GM12878 (cell line): ENCODE measurements at regions of chr6 and their contacts with region 1.

Region 1: GRCh38 chr6:13454286-13455221 is 32.8 kb downstream of the GFOD1 start:
- DNase-seq: peak; percentile 56
- ATAC-seq: peak; percentile 74
- H3K4me3 ChIP-seq: no peak overlapping the region
- H3K27ac ChIP-seq: peak overlapping the region; percentile 71
- H3K4me1 ChIP-seq: peaks cover 48% of the 10 kb centered on the region
- H3K27me3 ChIP-seq: no peaks in the 10 kb centered on the region
- CTCF ChIP-seq: peak; percentile 27 to 58 (median 33); a peak in 3 of 6 replicates
- EP300 ChIP-seq: no peak
- POLR2A ChIP-seq: peak; percentile 51
- RAD21 ChIP-seq: peak; percentile 64

Region 2: GRCh38 chr6:13120483-13121482 is 333.8 kb before region 1 on chr6:
- CTCF ChIA-PET with region 1: no interaction called
- POLR2A ChIA-PET with region 1: no interaction called
- RAD21 ChIA-PET with region 1: no interaction called
- SMC1A ChIA-PET with region 1: no interaction called
- in situ Hi-C with region 1: no loop called
- intact Hi-C with region 1: no loop called
- DNase-seq: no peak
- ATAC-seq: no peak
- H3K4me3 ChIP-seq: no peak overlapping the region
- H3K27ac ChIP-seq: no peak overlapping the region
- H3K4me1 ChIP-seq: no peaks in the 10 kb centered on the region
- H3K27me3 ChIP-seq: no peaks in the 10 kb centered on the region; a peak in 2 of 4 replicates
- CTCF ChIP-seq: no peak
- EP300 ChIP-seq: no peak
- POLR2A ChIP-seq: no peak
- RAD21 ChIP-seq: no peak

Region 3: GRCh38 chr6:13383328-13384163 is 71.0 kb before region 1 on chr6:
- CTCF ChIA-PET with region 1: interaction called, 15 read pairs
- POLR2A ChIA-PET with region 1: interaction called, 3 read pairs
- RAD21 ChIA-PET with region 1: interaction called, 18 read pairs
- SMC1A ChIA-PET with region 1: interaction called, 45 read pairs
- in situ Hi-C with region 1: no loop called
- intact Hi-C with region 1: no loop called
- DNase-seq: peak; percentile 91
- ATAC-seq: peak; percentile 98
- H3K4me3 ChIP-seq: no peak overlapping the region
- H3K27ac ChIP-seq: peak overlapping the region; percentile 93
- H3K4me1 ChIP-seq: peaks cover 45% of the 10 kb centered on the region
- H3K27me3 ChIP-seq: no peaks in the 10 kb centered on the region
- CTCF ChIP-seq: peak; percentile 40 to 67 (median 48); a peak in 5 of 6 replicates
- EP300 ChIP-seq: peak in 1 of 2 experiments; percentile 54; a peak in 2 of 4 replicates
- POLR2A ChIP-seq: no peak
- RAD21 ChIP-seq: peak; percentile 83

Region 4: GRCh38 chr6:13435477-13436246 is 18.9 kb before region 1 on chr6:
- CTCF ChIA-PET with region 1: interaction called, 75 read pairs
- POLR2A ChIA-PET with region 1: interaction called, 19 read pairs
- RAD21 ChIA-PET with region 1: interaction called, 98 read pairs
- SMC1A ChIA-PET with region 1: interaction called, 179 read pairs
- in situ Hi-C with region 1: no loop called
- intact Hi-C with region 1: loop called (anchors 1 kb)
- DNase-seq: no peak
- ATAC-seq: no peak
- H3K4me3 ChIP-seq: no peak overlapping the region
- H3K27ac ChIP-seq: peak overlapping the region; percentile 35; the same call in 1 of the 2 replicates
- H3K4me1 ChIP-seq: peaks cover 44% of the 10 kb centered on the region
- H3K27me3 ChIP-seq: no peaks in the 10 kb centered on the region
- CTCF ChIP-seq: no peak
- EP300 ChIP-seq: no peak
- POLR2A ChIP-seq: no peak
- RAD21 ChIP-seq: no peak

Region 5: DNA sequence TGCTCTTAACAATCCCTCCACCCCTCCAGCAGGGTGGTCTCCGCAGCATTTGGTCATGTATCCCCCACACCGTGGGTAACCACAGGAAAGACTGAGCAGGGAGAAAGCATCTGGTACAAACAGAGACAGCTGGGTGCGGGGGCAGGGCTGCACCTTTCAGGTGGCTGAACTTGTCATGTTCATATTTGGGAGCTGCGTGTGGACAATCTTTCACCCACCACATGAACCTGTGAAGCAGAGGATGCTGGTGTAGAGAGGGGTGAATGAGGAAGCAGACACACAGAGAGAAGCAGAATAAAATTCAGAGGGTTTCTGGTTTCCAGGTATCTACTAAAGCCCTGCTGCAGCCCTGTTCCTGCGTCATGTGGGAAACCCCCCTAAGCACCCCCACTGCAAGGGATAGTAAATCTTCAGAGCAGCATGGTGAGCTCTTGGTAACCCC is 24.0 kb after region 1 on chr6:
- CTCF ChIA-PET with region 1: interaction called, 9 read pairs
- POLR2A ChIA-PET with region 1: interaction called, 8 read pairs
- RAD21 ChIA-PET with region 1: interaction called, 19 read pairs
- SMC1A ChIA-PET with region 1: interaction called, 38 read pairs
- in situ Hi-C with region 1: no loop called
- intact Hi-C with region 1: no loop called
- DNase-seq: no peak
- ATAC-seq: peak; percentile 56
- H3K4me3 ChIP-seq: 0 out of 2 replicates have a peak overlapping the region, but pooled peaks have one; percentile 1
- H3K27ac ChIP-seq: peak overlapping the region; percentile 63
- H3K4me1 ChIP-seq: peaks cover 48% of the 10 kb centered on the region
- H3K27me3 ChIP-seq: no peaks in the 10 kb centered on the region
- CTCF ChIP-seq: no peak
- EP300 ChIP-seq: no peak
- POLR2A ChIP-seq: no peak
- RAD21 ChIP-seq: no peak

Region 6: DNA sequence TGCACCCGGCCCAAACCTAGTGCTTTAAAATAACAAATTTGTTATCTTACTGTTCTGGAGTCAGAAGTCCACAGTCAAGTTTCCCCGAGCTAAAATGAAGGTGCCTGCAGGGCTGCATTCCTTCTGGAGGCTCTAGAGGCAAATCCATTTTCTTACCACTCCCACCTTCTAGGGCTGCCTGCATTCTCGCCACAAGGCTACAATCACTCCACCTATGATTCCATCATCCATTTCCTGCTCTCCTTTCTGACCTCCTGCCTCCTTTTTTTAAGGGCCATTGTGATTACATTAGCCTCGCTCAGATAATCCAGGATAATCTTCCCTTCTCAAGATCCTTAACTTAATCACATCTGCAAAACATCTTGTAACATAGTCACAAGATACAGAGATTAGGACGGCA is 77.4 kb after region 1 on chr6:
- CTCF ChIA-PET with region 1: interaction called, 24 read pairs
- POLR2A ChIA-PET with region 1: no interaction called
- RAD21 ChIA-PET with region 1: interaction called, 12 read pairs
- SMC1A ChIA-PET with region 1: interaction called, 23 read pairs
- in situ Hi-C with region 1: no loop called
- intact Hi-C with region 1: loop called (anchors 5 kb)
- DNase-seq: no peak
- ATAC-seq: no peak
- H3K4me3 ChIP-seq: no peak overlapping the region
- H3K27ac ChIP-seq: no peak overlapping the region
- H3K4me1 ChIP-seq: peaks cover 3% of the 10 kb centered on the region
- H3K27me3 ChIP-seq: no peaks in the 10 kb centered on the region
- CTCF ChIP-seq: no peak
- EP300 ChIP-seq: no peak
- POLR2A ChIP-seq: no peak
- RAD21 ChIP-seq: no peak